ENCODE measurements at regions of chr11 and their contacts with region 1.

Region 1: GRCh38 chr11:13955971-13956421 is 6.5 kb upstream of the SPON1 start:
- DNase-seq: peak; percentile 69
- H3K4me3 ChIP-seq: no peak overlapping the region
- H3K27ac ChIP-seq: no peak overlapping the region
- H3K4me1 ChIP-seq: no peaks in the 10 kb centered on the region
- H3K27me3 ChIP-seq: no peaks in the 10 kb centered on the region
- CTCF ChIP-seq: peak; percentile 91

Region 2: DNA sequence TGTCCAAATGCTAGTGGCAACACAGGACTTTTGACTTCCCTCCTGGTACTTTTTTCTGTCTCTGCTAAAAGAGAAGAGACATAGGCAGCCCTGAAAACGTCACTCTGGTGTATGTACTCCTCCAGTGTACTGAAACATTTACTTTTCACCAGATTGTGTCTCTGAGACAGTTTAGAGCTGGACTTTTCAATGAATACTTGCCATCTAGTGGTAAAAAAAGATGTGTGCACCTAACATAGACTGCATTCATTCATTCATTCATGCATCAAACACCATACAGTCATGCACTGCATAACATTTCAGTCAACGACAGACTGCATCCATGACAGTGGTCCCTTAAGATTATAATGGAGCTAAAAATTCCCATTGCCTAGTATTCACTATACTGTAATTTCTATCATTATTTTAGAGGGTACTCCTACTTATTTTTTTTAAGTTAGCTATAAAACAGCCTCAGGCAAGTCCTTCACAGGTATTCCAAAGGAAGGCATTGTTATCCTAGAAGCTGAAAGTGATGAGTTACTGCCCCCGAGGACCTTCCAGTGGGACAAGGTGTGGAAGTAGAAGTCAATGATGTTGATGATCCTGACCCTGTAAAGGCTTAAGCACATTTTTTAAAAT is 192.8 kb after region 1 on chr11:
- intact Hi-C with region 1: loop called (anchors 5 kb)
- DNase-seq: no peak
- H3K4me3 ChIP-seq: no peak overlapping the region
- H3K27ac ChIP-seq: no peak overlapping the region
- H3K4me1 ChIP-seq: no peaks in the 10 kb centered on the region
- H3K27me3 ChIP-seq: no peaks in the 10 kb centered on the region
- CTCF ChIP-seq: peak; percentile 41

Region 3: DNA sequence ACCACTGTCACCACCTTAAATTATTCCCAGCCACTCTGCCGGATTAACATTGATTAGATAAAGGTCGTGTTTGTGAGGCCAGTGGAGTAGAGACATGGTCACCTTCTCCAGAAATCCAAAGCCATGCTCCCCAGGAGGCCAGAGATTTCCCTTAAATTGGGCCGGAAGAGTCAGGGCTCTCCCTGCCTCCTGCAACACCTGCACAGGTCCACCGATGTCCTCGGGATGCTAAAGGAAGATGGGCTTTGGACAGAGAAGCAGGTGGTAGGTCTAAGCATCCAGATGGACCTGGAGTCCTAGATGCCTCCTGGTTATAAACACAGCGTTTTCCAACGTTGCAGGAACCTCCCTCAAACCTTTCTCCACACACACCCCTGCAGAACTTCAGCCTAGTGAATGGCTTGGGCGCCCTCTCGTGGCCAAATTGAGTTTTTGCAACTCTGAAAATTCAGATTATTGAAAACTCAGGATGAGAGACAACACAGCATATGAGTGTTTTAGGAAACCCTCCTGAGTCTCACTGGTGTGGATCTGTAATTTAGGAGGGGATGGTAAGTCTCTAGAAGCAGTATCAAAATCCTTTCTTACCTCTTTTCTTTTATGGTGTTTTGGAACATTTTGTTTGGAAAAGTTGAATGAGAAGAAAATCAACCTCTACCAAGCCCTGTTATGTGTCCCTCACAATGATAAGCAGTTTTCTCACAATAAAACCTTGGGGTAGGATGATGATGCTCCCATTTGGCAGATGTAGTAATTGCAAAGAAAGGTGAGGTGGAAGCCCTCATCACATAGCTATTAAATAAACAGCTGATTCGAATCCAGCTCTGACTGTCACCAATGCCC is 293.3 kb after region 1 on chr11:
- intact Hi-C with region 1: loop called (anchors 2 kb)
- DNase-seq: peak; percentile 68
- H3K4me3 ChIP-seq: no peak overlapping the region
- H3K27ac ChIP-seq: no peak overlapping the region
- H3K4me1 ChIP-seq: no peaks in the 10 kb centered on the region
- H3K27me3 ChIP-seq: no peaks in the 10 kb centered on the region
- CTCF ChIP-seq: peak; percentile 91

Measured in colonic mucosa (tissue), 4 donors.